ENCODE measurements at regions of chr5 and their contacts with region 1.

Region 1: DNA sequence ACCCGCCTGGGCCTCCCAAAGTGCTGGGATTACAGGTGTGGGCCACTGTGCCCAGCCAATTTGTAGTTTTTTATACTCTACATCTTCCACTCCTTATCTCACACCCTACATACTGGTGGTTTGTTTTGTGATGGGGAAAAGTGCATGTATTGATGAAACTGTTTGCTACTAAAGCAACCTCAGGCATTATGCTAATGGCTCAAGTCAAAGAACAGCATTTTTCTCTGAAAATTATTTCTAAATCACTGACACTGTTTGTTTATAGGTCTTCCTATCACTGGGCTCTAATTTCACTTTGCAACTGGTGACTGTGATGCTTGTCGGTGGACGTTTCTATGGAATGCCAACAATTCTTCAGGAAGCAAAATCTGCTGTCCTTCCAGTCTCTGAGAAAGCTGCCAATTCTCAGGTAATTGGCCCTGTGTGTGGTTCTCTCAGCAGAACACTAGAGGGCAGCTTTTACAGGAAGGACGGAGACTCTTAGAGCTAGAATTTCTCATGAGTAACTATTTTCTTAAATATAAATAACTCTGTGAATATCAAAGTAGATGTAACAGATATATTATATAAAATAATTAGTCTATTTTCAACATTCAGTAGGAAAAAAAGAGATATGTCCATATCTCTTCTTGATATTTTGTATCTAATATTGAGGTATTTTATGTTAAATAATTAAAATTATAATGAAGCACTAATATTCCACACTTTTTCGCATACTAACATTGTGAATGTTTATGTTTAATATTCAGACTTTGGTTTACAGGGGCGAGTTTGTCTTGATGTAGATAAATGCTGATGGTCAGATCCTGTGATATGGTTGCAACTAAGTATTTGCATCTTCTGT is 244.1 kb downstream of the ADGRV1 start:
- DNase-seq: no peak
- ATAC-seq: peak in 1 of 2 donors; percentile 37

Region 2: DNA sequence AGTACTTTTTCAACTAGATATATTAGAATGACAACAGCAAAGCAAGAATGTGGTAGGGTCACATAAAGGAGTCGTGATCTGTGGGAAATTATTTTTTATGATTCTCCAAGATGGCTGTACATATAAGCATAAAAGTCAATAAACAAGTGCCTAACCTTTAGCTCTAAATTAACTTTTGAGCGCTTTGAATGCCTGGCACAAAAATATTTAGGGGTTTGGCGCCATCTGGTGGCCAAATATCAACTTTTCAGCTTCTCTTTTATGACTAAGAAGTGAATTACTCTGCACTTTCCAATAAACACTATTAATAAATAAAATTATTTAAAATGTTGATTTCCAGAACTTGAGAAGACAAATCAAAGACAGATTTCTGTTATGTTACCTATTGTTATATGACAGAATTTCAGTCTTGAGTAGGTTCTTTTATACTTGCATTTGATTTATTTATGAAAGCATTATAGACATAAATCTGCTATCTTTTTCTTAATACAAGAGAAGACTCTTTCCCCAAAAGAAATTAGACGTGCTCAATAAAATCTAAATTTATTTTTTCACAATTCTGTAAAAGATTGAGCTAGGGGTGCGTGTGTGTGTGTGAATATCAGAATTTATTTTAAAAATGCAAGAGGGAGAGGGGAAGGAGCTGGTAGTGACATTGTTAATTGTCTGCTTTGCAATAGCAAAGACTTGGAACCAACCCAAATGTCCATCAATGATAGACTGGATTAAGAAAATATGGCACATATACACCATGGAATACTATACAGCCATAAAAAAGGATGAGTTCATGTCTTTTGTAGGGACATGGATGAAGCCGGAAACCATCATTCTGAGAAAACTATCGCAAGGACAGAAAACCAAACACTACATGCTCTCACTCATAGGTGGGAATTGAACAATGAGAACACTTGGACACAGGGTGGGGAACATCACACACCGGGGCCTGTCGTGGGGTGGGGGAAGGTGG is 617.2 kb after region 1 on chr5:
- intact Hi-C with region 1: loop called in 1 of 2 experiments (anchors 5 kb)
- DNase-seq: peak; percentile 59
- ATAC-seq: peak in 1 of 2 donors; percentile 35

Measured in left cardiac atrium (tissue), 4 donors.